Posterior vena cava (tissue), 2 donors: ENCODE measurements at regions of chr7 and their contacts with region 1.

Region 1: DNA sequence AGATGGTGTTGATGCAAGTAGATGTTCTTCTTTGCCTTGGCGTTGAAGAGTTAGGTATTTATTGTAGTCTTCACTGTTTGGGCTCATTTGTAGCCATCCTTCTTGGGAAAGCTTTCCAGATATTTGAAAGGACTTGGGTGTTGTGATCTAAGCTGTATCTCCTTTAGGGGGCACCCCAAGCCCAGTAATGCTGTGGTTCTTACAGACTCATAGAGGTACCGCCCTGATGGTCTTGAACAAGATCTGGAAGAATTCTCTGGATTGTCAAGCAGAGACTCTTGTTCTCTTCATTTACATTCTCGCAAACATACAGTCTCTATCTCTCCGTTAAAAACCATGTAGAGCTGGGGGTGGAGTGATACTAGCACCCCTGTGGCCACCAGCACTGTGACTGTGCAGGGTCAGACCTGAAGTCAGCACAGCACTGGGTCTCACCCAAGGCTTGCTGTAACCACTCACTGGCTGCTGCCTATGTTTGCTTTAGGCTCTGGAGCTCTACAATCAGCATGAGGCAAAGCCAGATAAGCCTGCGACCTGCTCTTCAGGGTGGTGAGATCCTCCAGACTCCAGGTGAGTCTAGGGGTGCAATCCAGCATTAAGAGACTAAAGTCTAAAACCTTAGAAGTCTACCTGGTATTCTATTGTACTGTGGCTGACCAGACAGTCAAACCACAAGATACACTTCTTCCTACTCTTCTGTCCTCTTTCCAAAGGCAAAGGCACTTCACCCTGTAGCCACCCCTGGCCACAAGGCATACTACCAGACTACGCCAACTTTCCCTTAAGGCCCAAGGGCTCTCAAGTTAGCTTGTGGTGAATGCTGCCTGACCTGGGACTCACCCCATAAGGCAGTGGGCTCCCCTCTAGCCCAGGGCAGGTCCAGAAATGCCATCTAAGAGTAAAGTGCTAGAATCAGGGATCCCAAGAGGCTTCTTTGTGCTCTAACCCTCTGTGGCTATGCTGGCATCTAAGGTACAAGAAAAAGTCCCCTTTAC is 209.7 kb upstream of the TMEM196 start:
- DNase-seq: no peak

Region 2: GRCh38 chr7:19944363-19945120 is 38.6 kb before region 1 on chr7:
- intact Hi-C with region 1: no loop called
- DNase-seq: no peak

Region 3: DNA sequence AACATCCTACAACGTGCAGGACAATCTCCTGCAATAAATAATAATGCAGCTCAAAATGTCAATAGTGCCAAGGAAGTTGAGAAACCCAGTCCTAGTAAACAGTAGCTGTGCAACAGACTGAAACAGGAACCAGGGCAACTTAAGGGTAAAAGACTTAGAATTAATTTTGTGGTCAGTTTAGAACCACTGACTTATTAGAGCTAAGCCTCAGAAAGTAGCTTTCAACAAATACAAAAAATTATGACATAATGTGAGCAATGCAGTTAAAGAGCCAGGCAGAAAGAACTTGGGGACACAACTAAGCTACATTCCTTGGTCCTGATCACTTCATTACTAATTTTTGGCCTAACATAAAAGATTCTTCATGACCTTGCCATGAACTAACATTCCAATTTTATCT is 38.7 kb after region 1 on chr7:
- intact Hi-C with region 1: loop called in 1 of 2 experiments (anchors 5 kb)
- DNase-seq: no peak